Activated CD4-positive, alpha-beta T cell treated with anti-CD3 and anti-CD28 coated beads, Interleukin-2, amount 10 ng/mL, durations not matched to agents 7 days and 5 days (primary cell): ENCODE measurements at regions of chr1 and their contacts with region 1.

Region 1: DNA sequence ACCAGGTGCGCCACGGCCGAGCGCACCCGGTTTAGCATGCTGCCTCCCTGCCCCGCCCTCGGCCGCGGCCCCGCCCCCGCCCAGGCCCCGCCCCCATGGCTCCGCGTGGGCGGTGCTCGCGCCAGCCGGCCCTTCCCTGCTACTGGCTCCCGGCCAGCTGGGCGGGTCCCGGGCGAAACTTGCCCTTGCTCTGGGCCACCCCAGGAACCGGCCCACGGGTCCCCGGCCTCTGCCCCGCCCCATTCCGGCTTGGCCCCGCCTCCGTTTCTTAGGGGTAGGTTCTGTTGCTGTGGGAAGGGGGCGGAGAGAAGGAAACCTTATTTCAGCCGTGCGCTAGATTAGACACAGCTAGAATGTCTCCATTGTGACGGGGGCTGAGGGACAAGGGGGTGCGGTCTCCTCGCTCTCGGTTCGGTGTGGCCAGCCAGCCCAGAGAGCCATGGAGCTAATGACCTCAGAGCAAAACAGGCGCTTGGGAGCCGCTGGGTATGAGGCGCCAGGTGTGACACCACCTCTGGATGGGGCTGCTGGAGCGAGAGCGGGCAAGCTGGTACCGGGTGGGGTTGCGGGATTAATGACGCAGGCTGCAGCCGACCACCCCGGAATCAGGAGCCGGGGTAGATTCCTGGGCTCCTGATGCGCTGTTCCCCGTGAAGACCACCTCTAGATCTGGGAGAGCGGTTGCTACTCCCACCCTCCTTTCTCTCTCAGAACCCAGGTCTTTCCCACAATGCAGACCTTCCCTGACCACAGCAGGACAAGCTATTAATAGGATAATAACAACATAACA is at the start of gene PPM1J:
- DNase-seq: peak; percentile 97
- H3K4me3 Mint-ChIP-seq: peak within 1 kb of the TSS; percentile 78
- H3K27ac Mint-ChIP-seq: peak within 1 kb of the TSS; percentile 68
- H3K4me1 Mint-ChIP-seq: peaks cover 25% of the 10 kb centered on the region
- H3K27me3 Mint-ChIP-seq: peaks cover 47% of the 10 kb centered on the region
- total RNA-seq, gene PPM1J: not detected

Region 2: DNA sequence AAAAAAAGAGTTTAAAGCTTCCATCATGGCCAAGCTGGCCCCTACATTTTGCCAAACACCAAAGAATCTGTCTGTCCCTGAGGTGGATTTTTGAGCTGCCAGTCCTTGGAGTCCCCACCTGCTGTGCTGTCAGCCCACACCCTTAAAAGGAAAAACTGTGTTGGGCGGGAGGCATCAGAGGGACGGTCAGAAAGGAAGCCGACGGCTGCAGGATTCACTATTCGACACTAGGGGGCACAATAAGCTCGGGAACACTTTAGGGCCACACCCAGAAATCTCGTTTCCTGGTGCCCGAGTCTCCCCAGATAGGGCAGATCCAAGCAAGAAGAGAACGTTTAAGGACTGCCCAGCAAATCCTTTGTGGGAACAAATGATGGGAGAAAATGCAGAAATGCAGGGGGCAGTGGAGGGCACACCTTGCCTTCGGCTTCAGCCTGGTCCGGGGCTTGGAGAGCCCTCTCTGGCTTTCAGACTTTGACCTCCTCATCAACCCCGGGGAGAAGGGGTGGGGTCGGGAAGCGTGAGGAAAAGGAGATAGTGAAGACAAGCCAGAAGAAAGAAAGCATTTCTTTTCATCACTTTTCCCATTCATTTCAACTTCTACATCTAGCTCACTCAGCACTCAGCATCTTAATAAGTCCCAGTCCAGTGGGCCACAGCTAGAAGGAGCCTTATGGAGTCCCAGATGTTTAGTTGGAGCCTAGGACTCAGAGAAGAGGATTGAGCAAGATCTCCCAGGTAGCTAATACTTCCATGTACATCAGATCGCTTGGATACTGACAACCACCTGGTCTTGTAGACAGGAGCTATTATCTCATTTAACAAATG is 324.5 kb before region 1 on chr1:
- CTCF ChIA-PET with region 1: interaction called, 16 read pairs
- POLR2A ChIA-PET with region 1: no interaction called
- DNase-seq: peak; percentile 84
- H3K4me3 Mint-ChIP-seq: peak overlapping the region; percentile 47
- H3K27ac Mint-ChIP-seq: peak overlapping the region; percentile 55
- H3K4me1 Mint-ChIP-seq: peaks cover 31% of the 10 kb centered on the region
- H3K27me3 Mint-ChIP-seq: peaks cover 8% of the 10 kb centered on the region

Region 3: DNA sequence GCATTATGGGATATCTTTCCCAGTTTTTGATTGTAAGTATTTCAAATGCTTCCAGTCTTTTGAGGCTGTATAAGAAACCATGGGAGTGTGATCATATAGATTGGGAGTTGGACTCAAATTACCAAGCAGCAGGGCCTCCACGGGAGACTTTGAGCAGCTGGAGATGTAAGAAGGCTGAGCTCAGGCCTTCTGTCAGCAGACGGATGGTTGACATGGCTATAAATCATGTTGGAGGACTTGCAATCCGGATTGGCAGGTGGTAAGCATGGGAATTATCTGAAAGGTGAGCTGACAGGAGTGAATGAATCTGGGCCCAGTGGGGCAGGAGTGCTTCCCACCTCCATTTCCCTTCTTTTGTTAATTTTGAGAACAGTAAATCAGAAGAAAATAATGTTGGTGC is 82.8 kb after region 1 on chr1:
- CTCF ChIA-PET with region 1: interaction called, 36 read pairs
- POLR2A ChIA-PET with region 1: no interaction called
- DNase-seq: no peak
- H3K4me3 Mint-ChIP-seq: no peak overlapping the region
- H3K27ac Mint-ChIP-seq: no peak overlapping the region
- H3K4me1 Mint-ChIP-seq: no peaks in the 10 kb centered on the region
- H3K27me3 Mint-ChIP-seq: no peaks in the 10 kb centered on the region

Region 4: DNA sequence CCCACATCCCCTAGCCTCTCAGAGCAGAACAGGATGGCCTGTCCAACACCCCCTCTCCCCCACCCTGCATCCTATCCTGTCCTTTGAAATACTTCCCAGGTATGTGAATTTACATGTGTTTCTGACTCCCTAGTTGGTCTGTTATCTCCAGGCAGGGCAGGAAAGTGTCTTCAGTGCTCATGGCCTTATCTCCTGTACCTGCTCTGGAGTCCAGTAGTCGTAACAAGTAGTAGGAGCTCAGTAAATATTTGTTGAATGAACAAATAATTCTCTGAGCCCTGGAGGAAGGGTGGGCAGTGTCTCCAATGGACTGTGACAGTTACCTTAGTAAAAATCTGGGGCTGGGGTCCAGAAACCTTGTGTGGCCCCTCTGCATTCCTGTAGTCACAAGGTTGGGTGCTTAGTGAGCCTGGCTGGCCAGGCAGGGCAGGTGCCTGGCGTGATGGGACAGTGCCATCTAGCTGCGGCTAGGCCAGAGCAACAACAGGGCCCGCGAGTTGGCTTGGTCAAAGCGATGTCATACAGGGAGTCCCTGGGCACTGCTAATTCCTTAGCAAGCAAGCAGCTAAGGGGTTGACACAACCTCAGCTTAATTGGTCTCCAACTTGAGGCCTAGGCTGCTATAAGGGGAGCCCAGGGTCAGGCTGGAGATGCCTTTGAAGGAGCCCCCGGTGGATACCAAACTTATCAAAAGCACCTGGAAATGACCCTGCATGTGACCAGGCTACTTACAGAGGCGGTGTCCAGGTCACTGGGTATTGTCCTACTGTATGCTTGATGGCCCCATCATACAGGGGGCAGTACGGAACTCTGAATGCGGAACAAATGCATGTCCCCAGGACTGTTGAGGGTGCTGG is 88.7 kb after region 1 on chr1:
- CTCF ChIA-PET with region 1: interaction called, 36 read pairs
- POLR2A ChIA-PET with region 1: no interaction called
- DNase-seq: peak; percentile 59
- H3K4me3 Mint-ChIP-seq: no peak overlapping the region
- H3K27ac Mint-ChIP-seq: no peak overlapping the region
- H3K4me1 Mint-ChIP-seq: no peaks in the 10 kb centered on the region
- H3K27me3 Mint-ChIP-seq: peaks cover 7% of the 10 kb centered on the region

Region 5: GRCh38 chr1:112964347-112964746 is 248.9 kb after region 1 on chr1:
- CTCF ChIA-PET with region 1: no interaction called
- POLR2A ChIA-PET with region 1: no interaction called
- DNase-seq: no peak
- H3K4me3 Mint-ChIP-seq: no peak overlapping the region
- H3K27ac Mint-ChIP-seq: no peak overlapping the region
- H3K4me1 Mint-ChIP-seq: peaks cover 45% of the 10 kb centered on the region
- H3K27me3 Mint-ChIP-seq: no peaks in the 10 kb centered on the region